Activated B cell treated with CpG ODN at 0.5 μM for 24 hours (primary cell): ENCODE measurements at regions of chr3 and their contacts with region 1.

Region 1: GRCh38 chr3:156674046-156674910 is at the start of gene TIPARP:
- DNase-seq: peak; percentile 100
- ATAC-seq: peak; percentile 80
- H3K4me3 Mint-ChIP-seq: peak within 1 kb of the TSS; percentile 92
- H3K27ac Mint-ChIP-seq: peak within 1 kb of the TSS; percentile 97
- H3K4me1 Mint-ChIP-seq: peaks cover 42% of the 10 kb centered on the region
- H3K27me3 Mint-ChIP-seq: no peaks in the 10 kb centered on the region
- CTCF ChIP-seq: no peak
- total RNA-seq, gene TIPARP: 31.3 and 32.3 TPM in 2 replicates

Region 2: DNA sequence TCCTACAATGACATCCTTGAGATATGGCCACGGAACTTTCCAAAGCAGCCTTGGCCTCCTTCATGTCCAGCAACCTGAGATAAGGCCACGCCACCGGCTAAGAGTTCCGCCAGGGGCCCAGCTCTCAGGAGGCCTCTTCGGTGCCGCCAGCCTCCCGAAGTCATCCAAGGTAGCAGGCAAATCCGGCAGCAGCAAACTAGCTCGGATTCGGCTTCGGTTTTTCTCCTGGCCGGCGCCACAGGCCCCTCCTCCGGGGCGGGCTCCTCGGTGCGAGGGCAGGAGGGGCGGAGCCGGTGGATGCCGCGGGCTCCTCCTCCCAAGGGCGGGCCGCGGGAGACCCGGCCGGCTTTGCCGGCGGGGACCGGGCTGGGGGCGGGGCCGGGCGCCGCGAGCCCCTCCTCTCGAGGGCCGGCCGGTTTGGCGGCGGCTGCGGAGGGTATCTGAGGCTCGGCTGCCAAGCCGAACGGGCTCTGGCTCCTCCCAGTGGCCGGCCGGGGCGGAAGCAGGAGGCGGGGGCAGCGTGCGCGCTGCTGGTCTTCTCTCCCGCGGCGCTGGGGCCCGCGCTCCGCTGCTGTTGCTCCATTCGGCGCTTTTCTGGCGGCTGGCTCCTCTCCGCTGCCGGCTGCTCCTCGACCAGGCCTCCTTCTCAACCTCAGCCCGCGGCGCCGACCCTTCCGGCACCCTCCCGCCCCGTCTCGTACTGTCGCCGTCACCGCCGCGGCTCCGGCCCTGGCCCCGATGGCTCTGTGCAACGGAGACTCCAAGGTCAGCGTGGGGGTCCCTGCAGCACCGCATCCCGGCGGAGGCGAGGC is 803.9 kb before region 1 on chr3 and contains the start of gene GMPS:
- CTCF ChIA-PET with region 1: no interaction called
- POLR2A ChIA-PET with region 1: no interaction called
- intact Hi-C with region 1: loop called (anchors 5 kb)
- DNase-seq: peak; percentile 97
- ATAC-seq: peak; percentile 92
- H3K4me3 Mint-ChIP-seq: peak within 1 kb of the TSS; percentile 92
- H3K27ac Mint-ChIP-seq: peak within 1 kb of the TSS; percentile 93
- H3K4me1 Mint-ChIP-seq: peaks cover 18% of the 10 kb centered on the region
- H3K27me3 Mint-ChIP-seq: no peaks in the 10 kb centered on the region
- CTCF ChIP-seq: no peak
- total RNA-seq, gene GMPS: 42.2 and 45.1 TPM in 2 replicates

Region 3: DNA sequence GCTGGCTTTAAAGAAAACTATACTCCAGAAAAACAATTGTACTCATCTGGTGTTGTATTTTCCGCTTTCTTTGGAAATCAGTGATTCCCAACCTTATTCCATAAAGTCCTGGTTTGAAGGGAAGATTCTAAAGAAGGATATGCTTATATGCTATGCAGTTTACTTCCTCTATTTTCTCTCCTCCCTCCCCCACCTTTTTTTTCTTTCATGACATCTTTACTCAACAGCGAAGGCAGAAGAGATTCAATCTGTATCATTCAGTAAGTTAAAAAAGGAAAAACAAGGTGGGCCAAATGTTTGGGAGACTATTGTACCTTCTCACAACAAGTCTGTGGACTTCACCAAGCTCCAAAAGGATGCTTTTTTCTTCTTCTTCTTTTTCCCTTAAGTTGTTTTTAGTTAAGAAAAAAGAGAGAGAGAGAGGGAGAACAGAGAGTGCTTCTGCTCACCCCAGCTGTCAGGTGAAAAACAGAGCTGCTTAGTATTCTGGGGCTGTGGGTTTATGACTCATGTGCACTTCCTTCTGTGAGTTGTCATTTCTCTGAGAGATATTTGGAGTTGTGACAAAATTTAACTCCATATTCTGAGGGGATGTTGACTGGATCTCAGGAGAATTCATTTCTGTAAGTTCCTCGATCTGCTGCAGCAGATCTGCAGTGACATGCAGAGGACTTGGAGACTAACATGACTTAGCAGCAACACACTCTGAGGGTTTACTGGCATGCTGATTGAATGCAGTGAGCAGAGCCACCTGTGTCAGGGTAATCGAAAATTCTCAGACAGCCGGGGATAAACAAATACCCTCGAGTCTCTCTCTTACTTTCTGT is 190.1 kb before region 1 on chr3:
- CTCF ChIA-PET with region 1: no interaction called
- POLR2A ChIA-PET with region 1: interaction called, 3 read pairs
- intact Hi-C with region 1: loop called (anchors 1 kb)
- DNase-seq: peak; percentile 20
- ATAC-seq: peak; percentile 81
- H3K4me3 Mint-ChIP-seq: peak overlapping the region; percentile 79
- H3K27ac Mint-ChIP-seq: peak overlapping the region; percentile 93
- H3K4me1 Mint-ChIP-seq: peaks cover 32% of the 10 kb centered on the region
- H3K27me3 Mint-ChIP-seq: peaks cover under 1% of the 10 kb centered on the region
- CTCF ChIP-seq: no peak

Region 4: DNA sequence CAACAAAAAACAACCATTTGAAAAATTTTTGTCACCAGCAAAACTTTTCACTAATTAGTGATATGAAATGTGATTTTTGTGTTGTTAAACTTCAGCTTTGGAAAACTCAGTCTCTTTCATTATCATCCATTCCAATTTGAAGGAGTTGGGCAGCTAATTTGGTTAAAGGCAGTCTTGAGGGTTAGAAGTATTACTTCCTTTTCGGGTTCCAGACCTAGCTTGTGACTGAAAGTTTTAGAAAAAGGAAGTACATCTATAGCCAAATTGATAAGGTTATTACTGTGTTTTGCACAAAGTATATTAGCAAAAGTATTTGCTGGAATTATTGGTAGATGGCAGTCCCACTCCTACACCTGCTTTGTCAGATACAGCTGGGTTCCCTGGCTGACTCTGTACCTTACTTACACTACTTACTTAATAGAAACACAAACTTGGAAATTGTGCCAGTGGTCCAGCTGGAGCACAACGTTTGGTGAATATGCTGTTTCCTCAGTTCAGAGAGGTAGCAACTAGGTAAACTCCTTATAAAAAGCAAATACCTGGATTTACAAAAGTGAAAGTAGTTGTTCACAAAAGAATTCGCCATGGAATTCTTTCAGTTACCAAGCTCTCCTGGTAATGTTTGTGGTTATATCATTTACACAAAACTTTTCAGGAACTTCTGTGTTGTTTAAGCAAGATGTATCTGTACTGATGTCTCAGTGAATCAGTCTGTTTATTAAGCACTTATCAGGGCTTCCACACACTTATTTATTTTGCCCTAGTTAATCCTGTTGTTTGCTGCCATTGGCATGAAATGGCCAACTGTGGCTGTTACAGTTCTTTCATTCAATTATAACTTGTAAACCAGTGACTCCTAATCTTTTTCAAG is 31.7 kb after region 1 on chr3:
- CTCF ChIA-PET with region 1: interaction called, 3 read pairs
- POLR2A ChIA-PET with region 1: interaction called, 4 read pairs
- intact Hi-C with region 1: loop called (anchors 2 kb)
- DNase-seq: no peak
- ATAC-seq: peak; percentile 65
- H3K4me3 Mint-ChIP-seq: no peak overlapping the region
- H3K27ac Mint-ChIP-seq: peak overlapping the region; percentile 46
- H3K4me1 Mint-ChIP-seq: peaks cover 24% of the 10 kb centered on the region
- H3K27me3 Mint-ChIP-seq: no peaks in the 10 kb centered on the region
- CTCF ChIP-seq: no peak

Region 5: GRCh38 chr3:156978481-156978961 is 304.2 kb after region 1 on chr3:
- CTCF ChIA-PET with region 1: no interaction called
- POLR2A ChIA-PET with region 1: interaction called, 5 read pairs
- intact Hi-C with region 1: loop called (anchors 1 kb)
- DNase-seq: no peak
- ATAC-seq: peak; percentile 90
- H3K4me3 Mint-ChIP-seq: peak overlapping the region; percentile 61
- H3K27ac Mint-ChIP-seq: peak overlapping the region; percentile 95
- H3K4me1 Mint-ChIP-seq: peaks cover 51% of the 10 kb centered on the region
- H3K27me3 Mint-ChIP-seq: no peaks in the 10 kb centered on the region
- CTCF ChIP-seq: no peak

Region 6: GRCh38 chr3:157088601-157089454 is 414.6 kb after region 1 on chr3:
- CTCF ChIA-PET with region 1: interaction called, 13 read pairs
- POLR2A ChIA-PET with region 1: interaction called, 70 read pairs
- intact Hi-C with region 1: loop called (anchors 1 kb)
- DNase-seq: peak; percentile 92
- ATAC-seq: peak; percentile 92
- H3K4me3 Mint-ChIP-seq: peak overlapping the region; percentile 90
- H3K27ac Mint-ChIP-seq: peak overlapping the region; percentile 90
- H3K4me1 Mint-ChIP-seq: peaks cover 26% of the 10 kb centered on the region
- H3K27me3 Mint-ChIP-seq: peaks cover 1% of the 10 kb centered on the region
- CTCF ChIP-seq: no peak

Region 7: GRCh38 chr3:157174649-157175498 is 500.6 kb after region 1 on chr3:
- CTCF ChIA-PET with region 1: no interaction called
- POLR2A ChIA-PET with region 1: interaction called, 14 read pairs
- intact Hi-C with region 1: loop called (anchors 1 kb)
- DNase-seq: peak; percentile 91
- ATAC-seq: peak; percentile 90
- H3K4me3 Mint-ChIP-seq: peak overlapping the region; percentile 90
- H3K27ac Mint-ChIP-seq: peak overlapping the region; percentile 98
- H3K4me1 Mint-ChIP-seq: peaks cover 30% of the 10 kb centered on the region
- H3K27me3 Mint-ChIP-seq: no peaks in the 10 kb centered on the region
- CTCF ChIP-seq: no peak